ENCODE measurements at regions of chr1 and their contacts with region 1.

Region 1: GRCh38 chr1:39653546-39654031 is 14.1 kb upstream of the HEYL start:
- DNase-seq: peak; percentile 92
- ATAC-seq: peak; percentile 79
- H3K4me3 Mint-ChIP-seq: no peak overlapping the region
- H3K27ac Mint-ChIP-seq: no peak overlapping the region
- H3K4me1 Mint-ChIP-seq: peaks cover 11% of the 10 kb centered on the region
- H3K27me3 Mint-ChIP-seq: peaks cover 8% of the 10 kb centered on the region
- CTCF ChIP-seq: peak; percentile 76

Region 2: GRCh38 chr1:39408641-39409054 is 244.9 kb before region 1 on chr1:
- CTCF ChIA-PET with region 1: interaction called, 12 read pairs
- POLR2A ChIA-PET with region 1: no interaction called
- intact Hi-C with region 1: no loop called
- DNase-seq: peak; percentile 84
- ATAC-seq: peak; percentile 85
- H3K4me3 Mint-ChIP-seq: peak overlapping the region; percentile 80
- H3K27ac Mint-ChIP-seq: no peak overlapping the region
- H3K4me1 Mint-ChIP-seq: peaks cover 67% of the 10 kb centered on the region
- H3K27me3 Mint-ChIP-seq: no peaks in the 10 kb centered on the region
- CTCF ChIP-seq: no peak

Region 3: GRCh38 chr1:39596163-39596562 is 57.4 kb before region 1 on chr1:
- CTCF ChIA-PET with region 1: interaction called, 20 read pairs
- POLR2A ChIA-PET with region 1: interaction called, 4 read pairs
- intact Hi-C with region 1: no loop called
- DNase-seq: no peak
- ATAC-seq: no peak
- H3K4me3 Mint-ChIP-seq: no peak overlapping the region
- H3K27ac Mint-ChIP-seq: no peak overlapping the region
- H3K4me1 Mint-ChIP-seq: peaks cover 14% of the 10 kb centered on the region
- H3K27me3 Mint-ChIP-seq: peaks cover 11% of the 10 kb centered on the region
- CTCF ChIP-seq: no peak

Region 4: DNA sequence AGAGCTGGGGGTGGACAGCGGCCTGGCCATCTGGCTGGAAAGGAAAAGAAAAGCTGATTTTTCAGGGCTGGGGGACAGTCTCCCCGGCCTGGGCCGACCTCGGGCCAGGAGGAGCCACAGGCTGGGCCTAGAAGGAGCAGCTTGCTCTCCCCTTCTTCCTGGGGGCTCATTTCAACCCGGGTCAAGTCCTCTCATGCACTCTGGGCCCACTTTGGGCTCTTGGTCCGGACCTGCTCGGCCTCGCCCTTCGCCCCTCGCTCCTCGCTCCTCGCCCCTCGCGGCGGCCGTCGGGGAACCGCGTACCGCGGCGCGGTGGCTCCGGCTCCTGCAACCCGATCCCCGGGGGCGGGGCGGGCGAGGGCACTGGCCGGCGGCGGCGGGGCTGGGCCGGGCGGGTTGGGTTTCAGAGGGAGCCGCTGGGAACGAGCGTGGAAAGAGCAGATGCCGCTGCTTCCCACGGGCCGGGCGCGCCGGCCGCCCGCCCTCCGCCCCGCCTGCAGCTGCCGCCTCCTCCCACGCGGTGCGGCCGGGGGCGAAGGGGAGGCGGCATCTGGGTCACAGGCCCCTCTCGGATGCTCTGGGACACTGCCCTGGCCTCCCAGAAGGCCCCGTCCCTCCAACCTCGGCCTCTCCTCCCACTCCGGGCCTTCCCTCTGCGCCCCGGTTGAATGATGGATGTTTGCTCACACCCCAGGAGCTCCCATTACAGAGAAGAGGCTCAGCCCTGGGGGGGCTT is 20.7 kb before region 1 on chr1:
- CTCF ChIA-PET with region 1: interaction called, 42 read pairs
- POLR2A ChIA-PET with region 1: no interaction called
- intact Hi-C with region 1: no loop called
- DNase-seq: no peak
- ATAC-seq: no peak
- H3K4me3 Mint-ChIP-seq: no peak overlapping the region
- H3K27ac Mint-ChIP-seq: no peak overlapping the region
- H3K4me1 Mint-ChIP-seq: peaks cover 5% of the 10 kb centered on the region
- H3K27me3 Mint-ChIP-seq: peaks cover 28% of the 10 kb centered on the region
- CTCF ChIP-seq: no peak

Region 5: DNA sequence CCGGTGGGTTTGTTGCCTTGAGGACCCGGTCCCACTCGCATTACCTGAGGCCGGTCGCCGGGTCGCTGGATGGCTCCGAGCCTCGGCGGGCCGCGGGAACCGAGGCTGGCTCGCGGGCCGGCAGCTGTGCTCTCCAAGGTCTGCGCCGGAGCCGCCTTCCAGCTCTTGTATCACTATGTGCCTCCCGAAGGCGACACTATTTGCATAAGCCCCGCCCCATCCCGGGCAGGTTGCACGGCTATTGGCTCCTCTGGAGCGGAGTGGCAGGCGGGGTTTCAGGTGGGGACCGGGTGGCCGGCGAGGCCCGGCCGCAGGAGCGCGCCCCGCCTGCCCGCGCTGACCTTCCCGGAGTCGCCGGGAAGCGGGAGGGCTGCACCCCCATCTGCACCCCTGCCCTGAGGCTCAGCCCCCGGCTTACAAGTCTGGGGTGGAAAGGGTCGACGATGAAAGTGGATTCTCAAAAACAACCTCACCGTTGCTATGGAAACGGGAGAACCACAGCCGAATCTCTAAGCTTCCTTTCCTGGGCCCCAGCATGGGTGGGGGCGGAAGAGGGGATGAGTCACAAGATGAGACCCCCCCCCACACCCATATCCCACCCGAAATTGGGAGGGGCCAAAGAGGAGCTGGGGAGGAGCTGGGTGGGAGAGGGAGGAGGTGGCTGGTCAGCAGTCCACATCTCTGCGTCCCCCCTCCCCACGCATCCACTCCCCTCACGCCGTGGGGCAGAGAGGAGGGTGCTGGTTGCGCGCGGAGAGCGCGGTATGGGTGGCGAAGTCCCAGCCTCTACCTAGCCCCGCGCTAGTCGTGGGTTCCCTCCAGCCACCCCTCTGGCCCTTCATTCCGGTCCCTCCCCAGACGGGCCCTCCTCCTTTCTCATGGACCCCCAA is 37.9 kb after region 1 on chr1 and contains the start of gene HPCAL4:
- CTCF ChIA-PET with region 1: interaction called, 23 read pairs
- POLR2A ChIA-PET with region 1: no interaction called
- intact Hi-C with region 1: no loop called
- DNase-seq: peak; percentile 93
- ATAC-seq: peak; percentile 94
- H3K4me3 Mint-ChIP-seq: peak within 1 kb of the TSS; percentile 76
- H3K27ac Mint-ChIP-seq: no peak within 1 kb of the TSS
- H3K4me1 Mint-ChIP-seq: peaks cover 34% of the 10 kb centered on the region
- H3K27me3 Mint-ChIP-seq: peaks cover 25% of the 10 kb centered on the region
- CTCF ChIP-seq: no peak
- total RNA-seq, gene HPCAL4: 2.8 to 3.0 TPM

Region 6: GRCh38 chr1:39720094-39720999 is 66.8 kb after region 1 on chr1:
- CTCF ChIA-PET with region 1: interaction called, 40 read pairs
- POLR2A ChIA-PET with region 1: no interaction called
- intact Hi-C with region 1: no loop called
- DNase-seq: no peak
- ATAC-seq: peak; percentile 56
- H3K4me3 Mint-ChIP-seq: no peak overlapping the region
- H3K27ac Mint-ChIP-seq: no peak overlapping the region
- H3K4me1 Mint-ChIP-seq: no peaks in the 10 kb centered on the region
- H3K27me3 Mint-ChIP-seq: peaks cover 41% of the 10 kb centered on the region
- CTCF ChIP-seq: peak; percentile 61

Measured in activated CD8-positive, alpha-beta T cell treated with anti-CD3 and anti-CD28 coated beads for 36 hours (primary cell).